Activated CD4-positive, alpha-beta memory T cell treated with anti-CD3 and anti-CD28 coated beads, Interleukin-2, amount 10 ng/mL, durations not matched to agents 7 days and 5 days (primary cell): ENCODE measurements at regions of chr4 and their contacts with region 1.

Region 1: DNA sequence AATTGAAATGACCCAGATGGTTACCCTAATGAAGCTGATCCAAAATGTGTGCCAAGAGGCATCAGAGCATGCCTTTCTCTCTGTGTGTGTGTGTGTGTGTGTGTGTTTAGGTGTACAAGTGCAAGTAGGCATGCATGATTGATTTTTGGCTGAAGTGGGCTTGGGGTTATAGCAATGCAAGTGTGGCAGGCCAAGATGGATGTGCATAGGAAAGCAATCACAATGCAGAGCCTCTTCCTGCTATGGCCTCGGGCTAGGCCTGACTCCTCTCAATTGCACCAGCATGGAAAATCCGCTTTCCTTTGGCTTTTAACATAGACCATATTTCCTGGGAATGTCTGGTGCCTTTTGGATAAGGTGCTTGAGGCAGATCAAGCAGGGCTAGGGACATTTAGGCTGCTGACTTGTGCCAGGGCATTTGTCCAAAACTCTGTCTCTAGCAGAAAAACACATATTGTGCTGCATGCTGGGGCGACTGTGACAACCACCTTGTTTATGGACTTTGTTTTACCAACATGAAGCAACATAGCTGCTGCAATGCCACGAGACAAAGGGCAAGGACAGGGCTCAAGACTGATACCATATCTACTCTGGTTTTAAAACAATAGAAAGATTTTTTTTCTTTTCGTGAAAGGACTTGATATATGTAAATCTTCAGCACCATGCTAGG is 395.7 kb downstream of the RAPGEF2 start:
- DNase-seq: no peak
- H3K4me3 Mint-ChIP-seq: no peak overlapping the region
- H3K27ac Mint-ChIP-seq: no peak overlapping the region
- H3K4me1 Mint-ChIP-seq: no peaks in the 10 kb centered on the region
- H3K27me3 Mint-ChIP-seq: peaks cover 2% of the 10 kb centered on the region

Region 2: GRCh38 chr4:159420162-159421057 is 78.2 kb before region 1 on chr4:
- CTCF ChIA-PET with region 1: no interaction called
- POLR2A ChIA-PET with region 1: no interaction called
- DNase-seq: no peak
- H3K4me3 Mint-ChIP-seq: no peak overlapping the region
- H3K27ac Mint-ChIP-seq: no peak overlapping the region
- H3K4me1 Mint-ChIP-seq: no peaks in the 10 kb centered on the region
- H3K27me3 Mint-ChIP-seq: peaks cover 4% of the 10 kb centered on the region

Region 3: DNA sequence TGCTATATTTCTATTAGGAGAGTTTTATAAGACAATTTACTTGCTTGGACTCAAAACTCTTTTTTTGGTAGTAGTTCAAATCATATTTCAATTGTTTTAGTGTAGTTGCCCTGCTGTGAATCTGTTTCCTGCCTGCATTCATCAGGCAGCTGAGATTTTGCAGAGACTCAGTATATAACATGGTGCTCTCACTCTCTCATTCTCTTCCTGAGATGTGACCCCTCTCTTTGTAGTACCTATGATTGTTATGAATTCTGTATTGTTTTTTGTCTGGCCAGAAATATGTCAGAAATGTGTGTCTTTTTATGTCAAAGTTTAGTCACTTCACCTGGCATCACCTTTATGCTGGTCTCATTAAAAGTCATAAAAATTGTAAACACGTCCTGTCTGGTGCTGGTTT is 21.7 kb before region 1 on chr4:
- CTCF ChIA-PET with region 1: no interaction called
- POLR2A ChIA-PET with region 1: no interaction called
- DNase-seq: no peak
- H3K4me3 Mint-ChIP-seq: no peak overlapping the region
- H3K27ac Mint-ChIP-seq: no peak overlapping the region
- H3K4me1 Mint-ChIP-seq: no peaks in the 10 kb centered on the region
- H3K27me3 Mint-ChIP-seq: no peaks in the 10 kb centered on the region

Region 4: GRCh38 chr4:159487284-159487747 is 11.3 kb before region 1 on chr4:
- CTCF ChIA-PET with region 1: interaction called, 13 read pairs
- POLR2A ChIA-PET with region 1: no interaction called
- DNase-seq: peak; percentile 21
- H3K4me3 Mint-ChIP-seq: no peak overlapping the region
- H3K27ac Mint-ChIP-seq: no peak overlapping the region
- H3K4me1 Mint-ChIP-seq: no peaks in the 10 kb centered on the region
- H3K27me3 Mint-ChIP-seq: peaks cover 11% of the 10 kb centered on the region

Region 5: GRCh38 chr4:159698336-159698735 is 199.8 kb after region 1 on chr4:
- CTCF ChIA-PET with region 1: no interaction called
- POLR2A ChIA-PET with region 1: no interaction called
- DNase-seq: no peak
- H3K4me3 Mint-ChIP-seq: no peak overlapping the region
- H3K27ac Mint-ChIP-seq: no peak overlapping the region
- H3K4me1 Mint-ChIP-seq: no peaks in the 10 kb centered on the region
- H3K27me3 Mint-ChIP-seq: no peaks in the 10 kb centered on the region